ENCODE measurements at regions of chr10 and their contacts with region 1.

Region 1: DNA sequence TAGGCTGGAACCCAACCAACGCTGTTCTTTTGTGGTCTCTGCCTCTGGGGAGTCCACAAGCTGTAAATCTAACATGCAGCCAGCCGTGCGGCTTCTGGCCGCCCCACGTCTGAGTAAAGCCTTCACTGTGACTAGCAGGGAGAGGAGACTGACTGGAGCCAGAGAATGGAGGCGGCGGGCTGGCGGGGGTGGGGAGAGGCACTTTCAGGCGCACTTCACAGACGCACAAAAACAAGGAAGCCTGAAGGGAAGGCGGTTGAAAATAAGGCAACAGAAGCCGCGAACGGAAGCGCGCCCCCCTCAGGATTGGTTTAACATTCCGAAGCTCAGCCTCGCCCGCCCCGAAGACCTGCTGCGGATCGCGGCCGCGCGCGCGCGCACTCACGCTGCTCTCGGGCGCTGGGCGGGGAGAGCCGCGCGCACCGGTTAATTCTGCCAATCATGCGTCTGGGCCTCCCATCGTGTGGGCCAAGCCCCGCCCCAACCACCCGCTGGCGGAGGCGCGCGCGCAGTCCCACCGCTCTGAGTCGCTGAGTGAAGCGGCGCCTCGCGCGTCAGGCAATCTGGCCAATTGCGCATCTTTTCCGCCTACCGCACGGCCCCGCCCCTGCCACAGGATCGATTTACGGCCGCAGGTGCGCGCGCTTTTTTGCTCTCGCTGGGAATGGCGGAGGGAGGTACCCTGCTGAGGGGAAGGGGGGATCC is at the start of gene SFR1:
- DNase-seq: peak; percentile 99
- H3K4me3 ChIP-seq: peak within 1 kb of the TSS; percentile 73 to 78 (median 78)
- H3K27ac ChIP-seq: peak within 1 kb of the TSS; percentile 100
- H3K4me1 ChIP-seq: peaks cover 39% of the 10 kb centered on the region
- H3K27me3 ChIP-seq: no peaks in the 10 kb centered on the region
- CTCF ChIP-seq: peak; percentile 42 to 65
- total RNA-seq, gene SFR1: 5.8 to 16.4 TPM

Region 2: DNA sequence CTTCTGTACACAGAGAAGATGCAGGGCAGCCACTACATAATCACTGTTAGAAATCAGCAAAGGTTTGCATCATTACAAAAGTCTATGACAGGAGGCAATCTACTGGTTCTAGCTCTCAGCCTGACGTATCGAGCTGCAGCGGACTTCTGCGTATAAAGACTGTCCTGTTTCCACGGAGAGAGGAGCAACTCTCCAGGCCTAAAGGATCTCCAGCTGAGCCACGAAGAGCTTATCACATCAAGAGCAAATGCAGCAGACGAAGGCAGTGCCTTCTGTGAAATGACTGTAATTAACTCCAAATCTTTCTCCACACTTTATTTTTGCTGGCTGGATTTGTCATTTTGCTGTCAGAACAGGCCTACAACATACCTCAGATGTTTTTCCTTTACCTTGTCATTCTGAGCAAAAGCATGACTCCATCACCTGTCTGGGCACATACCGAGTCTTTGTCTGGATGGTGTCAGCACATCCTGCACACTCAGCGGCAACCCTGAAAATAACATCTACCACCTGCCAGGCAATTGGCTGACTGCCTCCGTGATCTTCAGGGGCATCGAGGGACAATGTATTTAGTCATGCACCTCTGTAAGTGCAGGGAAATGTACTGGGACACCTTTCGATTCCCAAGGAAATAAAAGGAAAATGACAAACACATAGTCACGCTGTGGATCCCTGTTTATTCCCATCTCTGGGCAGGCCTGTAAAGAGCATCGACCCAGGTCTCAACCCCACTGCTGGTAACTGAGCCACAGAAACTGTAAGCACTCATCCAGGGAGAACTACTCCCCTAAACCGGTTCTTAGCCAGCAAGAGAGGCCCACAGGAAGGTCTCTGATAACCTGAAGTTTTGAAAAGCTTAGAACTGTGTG is 240.0 kb before region 1 on chr10:
- CTCF ChIA-PET with region 1: no interaction called
- dilution Hi-C with region 1: no loop called
- in situ Hi-C with region 1: no loop called
- intact Hi-C with region 1: no loop called
- DNase-seq: peak; percentile 99
- H3K4me3 ChIP-seq: no peak overlapping the region
- H3K27ac ChIP-seq: peak overlapping the region; percentile 98
- H3K4me1 ChIP-seq: peaks cover 63% of the 10 kb centered on the region
- H3K27me3 ChIP-seq: no peaks in the 10 kb centered on the region
- CTCF ChIP-seq: peak in 1 of 2 donors; percentile 12

Region 3: DNA sequence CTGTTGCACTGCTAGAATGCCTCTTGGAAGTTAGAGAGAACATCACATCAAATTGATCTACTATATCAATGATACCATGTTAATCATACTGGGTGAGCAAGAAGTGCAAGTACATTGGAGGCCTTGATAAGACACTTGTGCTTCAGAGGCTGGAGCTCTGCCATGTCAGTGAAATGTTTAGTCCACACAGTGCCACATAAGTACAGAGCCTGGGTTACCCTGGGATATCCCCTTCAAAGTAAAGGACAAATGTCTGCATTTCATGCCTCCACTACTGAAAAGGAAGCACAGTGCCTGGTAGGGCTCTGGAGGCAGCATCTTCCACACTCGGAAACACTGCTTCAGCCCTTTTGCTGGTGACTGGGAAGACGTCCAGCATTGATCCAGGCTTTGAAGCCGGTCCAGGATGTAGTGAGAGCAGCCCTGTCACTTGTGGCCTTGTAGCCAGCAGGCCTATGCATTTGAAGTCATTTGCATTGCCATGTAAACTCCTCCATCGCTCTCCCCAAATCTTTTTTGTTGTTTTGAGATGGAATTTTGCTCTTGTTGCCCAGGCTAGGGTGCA is 188.0 kb before region 1 on chr10:
- CTCF ChIA-PET with region 1: interaction called, 14 read pairs
- dilution Hi-C with region 1: no loop called
- in situ Hi-C with region 1: no loop called
- intact Hi-C with region 1: no loop called
- DNase-seq: no peak
- H3K4me3 ChIP-seq: no peak overlapping the region
- H3K27ac ChIP-seq: no peak overlapping the region
- H3K4me1 ChIP-seq: no peaks in the 10 kb centered on the region
- H3K27me3 ChIP-seq: no peaks in the 10 kb centered on the region
- CTCF ChIP-seq: no peak

Region 4: GRCh38 chr10:104028146-104028545 is 93.5 kb before region 1 on chr10:
- CTCF ChIA-PET with region 1: interaction called, 5 read pairs
- dilution Hi-C with region 1: no loop called
- in situ Hi-C with region 1: no loop called
- intact Hi-C with region 1: loop called (anchors 1 kb)
- DNase-seq: peak; percentile 46
- H3K4me3 ChIP-seq: no peak overlapping the region
- H3K27ac ChIP-seq: no peak overlapping the region
- H3K4me1 ChIP-seq: no peaks in the 10 kb centered on the region
- H3K27me3 ChIP-seq: no peaks in the 10 kb centered on the region
- CTCF ChIP-seq: peak; percentile 50 to 52

Region 5: DNA sequence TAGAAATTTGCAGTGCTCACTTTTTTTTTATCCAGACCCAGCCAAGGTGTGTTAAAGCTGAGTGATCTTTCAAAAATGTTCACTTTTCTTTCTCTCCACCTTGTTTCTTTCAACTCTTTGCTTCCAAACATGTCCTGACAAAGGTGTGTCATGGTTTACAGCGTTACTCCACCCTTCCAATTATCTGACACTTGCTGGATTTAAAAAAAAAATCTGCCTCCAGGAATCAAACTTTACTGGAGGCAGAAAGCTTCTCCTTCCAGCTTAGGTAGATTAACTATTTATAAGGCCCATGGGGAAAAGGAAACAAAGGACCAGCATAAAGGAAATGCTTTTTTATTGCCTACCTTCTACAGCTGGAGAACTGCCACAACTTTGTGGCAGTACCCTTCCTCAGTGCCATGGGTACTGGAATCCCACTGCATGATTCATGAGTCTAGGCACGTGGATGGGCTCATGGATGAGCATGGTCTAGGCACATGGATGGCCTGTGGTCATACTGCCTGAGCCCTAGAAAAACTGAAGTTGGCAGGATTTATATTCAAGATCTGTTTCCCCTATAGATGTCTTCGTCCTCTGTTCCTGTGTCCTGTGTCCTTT is 35.8 kb before region 1 on chr10 and contains the start of gene COL17A1:
- CTCF ChIA-PET with region 1: interaction called, 5 read pairs
- dilution Hi-C with region 1: loop called (anchors 5 kb)
- in situ Hi-C with region 1: loop called (anchors 5 kb)
- intact Hi-C with region 1: loop called (anchors 1 kb)
- DNase-seq: peak; percentile 88
- H3K4me3 ChIP-seq: peak within 1 kb of the TSS; percentile 68 to 99 (median 96)
- H3K27ac ChIP-seq: peak within 1 kb of the TSS; percentile 100
- H3K4me1 ChIP-seq: peaks cover 41% of the 10 kb centered on the region
- H3K27me3 ChIP-seq: no peaks in the 10 kb centered on the region
- CTCF ChIP-seq: no peak
- total RNA-seq, gene COL17A1: 1,287 to 2,380 TPM

Region 6: DNA sequence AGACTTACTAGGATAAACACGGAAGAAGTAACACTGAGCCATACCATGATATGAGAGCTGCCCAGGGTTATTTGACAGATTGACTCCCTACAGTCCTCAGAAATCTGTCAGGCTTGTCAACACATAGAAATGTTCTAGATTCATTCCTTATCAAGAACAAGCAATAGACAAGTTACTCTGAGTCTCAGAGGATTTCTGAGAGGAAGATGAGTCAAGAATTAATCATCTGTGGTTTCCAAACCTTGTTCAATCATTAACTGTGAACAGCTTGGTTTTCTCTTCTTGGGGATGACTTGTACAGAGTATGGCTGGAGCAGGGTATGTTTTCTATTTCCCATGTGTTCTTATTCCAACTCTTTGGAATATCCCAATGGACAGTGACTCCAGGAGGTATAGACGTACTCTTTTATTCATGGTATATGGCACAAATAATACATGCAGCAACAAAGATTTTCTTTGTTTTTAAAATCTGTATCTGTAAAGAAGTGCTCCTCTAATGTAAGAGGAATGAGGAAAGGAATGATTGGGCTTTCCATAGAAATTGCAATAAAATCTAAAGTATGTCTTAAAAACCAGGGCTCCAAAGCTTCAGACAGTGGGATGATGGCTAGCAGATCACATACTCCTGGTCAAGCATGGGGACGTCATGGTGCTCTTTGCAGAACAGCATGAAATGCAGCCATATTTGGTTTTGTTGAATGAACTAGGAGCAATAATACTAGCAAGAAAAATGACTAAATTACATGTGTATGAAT is 11.6 kb before region 1 on chr10:
- CTCF ChIA-PET with region 1: no interaction called
- dilution Hi-C with region 1: no loop called
- in situ Hi-C with region 1: no loop called
- intact Hi-C with region 1: no loop called
- DNase-seq: peak; percentile 94
- H3K4me3 ChIP-seq: no peak overlapping the region
- H3K27ac ChIP-seq: peak overlapping the region; percentile 69
- H3K4me1 ChIP-seq: peaks cover 27% of the 10 kb centered on the region
- H3K27me3 ChIP-seq: no peaks in the 10 kb centered on the region
- CTCF ChIP-seq: no peak

Region 7: GRCh38 chr10:104209575-104210198 is 88.0 kb after region 1 on chr10:
- CTCF ChIA-PET with region 1: no interaction called
- dilution Hi-C with region 1: no loop called
- in situ Hi-C with region 1: loop called in 1 of 2 experiments (anchors 10 kb)
- intact Hi-C with region 1: loop called (anchors 2 kb)
- DNase-seq: peak; percentile 21
- H3K4me3 ChIP-seq: no peak overlapping the region
- H3K27ac ChIP-seq: no peak overlapping the region
- H3K4me1 ChIP-seq: no peaks in the 10 kb centered on the region
- H3K27me3 ChIP-seq: no peaks in the 10 kb centered on the region
- CTCF ChIP-seq: peak; percentile 54 to 75

Measured in mammary epithelial cell (primary cell).